T-cell (primary cell): ENCODE measurements at regions of chr10 and their contacts with region 1.

Region 1: GRCh38 chr10:27568196-27569175 is 64.4 kb downstream of the RAB18 start:
- DNase-seq: peak in 1 of 35 experiments; percentile 44
- ATAC-seq: peak in 3 of 4 experiments; percentile 58 to 81 (median 60)
- H3K4me3 ChIP-seq: no peak overlapping the region
- H3K4me3 Mint-ChIP-seq: no peak overlapping the region
- H3K27ac ChIP-seq: peak overlapping the region; percentile 60
- H3K27ac Mint-ChIP-seq: peak overlapping the region; percentile 80 to 83
- H3K4me1 ChIP-seq: peaks cover 0 to 17% of the 10 kb centered on the region in 2 experiments
- H3K4me1 Mint-ChIP-seq: peaks cover 37 to 49% (median 38%) of the 10 kb centered on the region in 3 donors
- H3K27me3 ChIP-seq: peaks cover 0 to 2% of the 10 kb centered on the region in 2 experiments
- H3K27me3 Mint-ChIP-seq: no peaks in the 10 kb centered on the region

Region 2: DNA sequence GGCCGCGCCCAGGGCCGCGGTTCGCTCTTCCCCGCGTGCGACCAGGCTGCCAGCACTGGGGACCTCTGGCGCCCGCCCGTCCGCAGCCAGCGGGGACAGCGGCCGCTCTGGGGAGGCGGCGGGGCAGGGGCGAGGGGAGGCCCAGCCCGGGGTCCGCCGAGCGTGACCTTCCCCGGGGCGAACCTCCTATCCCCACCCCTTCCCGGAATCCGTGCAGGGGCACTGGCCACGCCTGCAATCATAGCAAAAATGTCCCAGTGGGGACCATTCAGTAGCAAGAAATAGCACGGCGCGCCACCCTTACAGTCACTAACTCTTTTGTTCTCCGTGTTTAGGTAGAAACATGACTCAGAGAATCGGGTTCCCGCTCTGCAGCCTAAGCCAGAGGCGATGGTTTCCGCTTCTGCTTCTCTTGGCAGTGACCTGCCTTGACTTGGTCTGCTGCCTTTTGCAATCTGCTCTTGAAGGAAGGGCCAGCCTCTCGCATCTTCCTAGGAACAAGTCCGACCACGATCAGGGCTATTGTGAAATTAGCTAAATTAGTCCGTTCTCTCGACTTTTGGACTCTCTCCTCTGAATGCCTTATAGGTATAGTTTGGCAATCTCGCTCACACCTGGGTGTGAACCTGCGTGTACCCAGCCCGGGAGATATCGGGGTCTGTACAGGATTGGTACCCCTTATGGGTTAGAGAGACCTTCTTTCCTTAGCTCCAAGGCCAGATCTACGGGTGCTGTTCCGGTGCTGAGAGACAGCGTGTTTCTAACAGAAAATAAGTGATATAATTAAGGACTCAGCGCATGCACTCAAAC is 248.5 kb before region 1 on chr10:
- CTCF ChIA-PET with region 1: interaction called in 1 of 2 experiments, 13 read pairs
- POLR2A ChIA-PET with region 1: no interaction called
- DNase-seq: peak in 10 of 35 experiments; percentile 0 to 12 (median 6)
- ATAC-seq: peak; percentile 54 to 76 (median 64)
- H3K4me3 ChIP-seq: no peak overlapping the region
- H3K4me3 Mint-ChIP-seq: peak overlapping the region in 2 of 3 donors; percentile 31 to 61
- H3K27ac ChIP-seq: no peak overlapping the region
- H3K27ac Mint-ChIP-seq: no peak overlapping the region
- H3K4me1 ChIP-seq: peaks cover 0 to 9% of the 10 kb centered on the region in 2 experiments
- H3K4me1 Mint-ChIP-seq: peaks cover 2 to 10% (median 9%) of the 10 kb centered on the region in 3 donors
- H3K27me3 ChIP-seq: peaks cover 0 to 19% of the 10 kb centered on the region in 2 experiments
- H3K27me3 Mint-ChIP-seq: peaks cover 10 to 29% of the 10 kb centered on the region in 2 donors

Region 3: DNA sequence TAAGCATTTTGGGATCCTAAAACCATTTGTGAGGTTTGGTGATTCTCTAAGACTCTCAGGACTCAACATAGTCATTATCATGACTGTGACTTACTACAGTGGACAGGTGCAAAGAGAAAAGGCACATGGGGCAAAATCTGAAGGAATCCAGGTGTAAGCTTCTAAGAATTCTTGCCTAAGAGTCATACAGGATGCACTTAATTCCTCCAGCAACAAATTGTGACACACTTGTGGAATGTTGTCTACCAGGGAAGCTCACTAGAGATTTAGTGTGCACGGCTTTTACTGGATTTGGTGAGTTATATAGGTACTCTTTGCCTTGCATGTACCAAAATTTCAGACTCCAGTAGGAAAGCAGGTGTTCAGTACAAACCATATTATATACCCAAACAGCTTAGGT is 1012.3 kb after region 1 on chr10:
- CTCF ChIA-PET with region 1: no interaction called
- POLR2A ChIA-PET with region 1: interaction called in 1 of 2 experiments, 15 read pairs
- DNase-seq: no peak
- ATAC-seq: no peak
- H3K4me3 ChIP-seq: no peak overlapping the region
- H3K4me3 Mint-ChIP-seq: no peak overlapping the region
- H3K27ac ChIP-seq: no peak overlapping the region
- H3K27ac Mint-ChIP-seq: peak overlapping the region in 1 of 2 donors; percentile 41
- H3K4me1 ChIP-seq: peaks cover 6 to 17% of the 10 kb centered on the region in 2 experiments
- H3K4me1 Mint-ChIP-seq: peaks cover 72 to 80% (median 74%) of the 10 kb centered on the region in 3 donors
- H3K27me3 ChIP-seq: no peaks in the 10 kb centered on the region
- H3K27me3 Mint-ChIP-seq: no peaks in the 10 kb centered on the region